Adrenal gland (tissue), 19 donors: ENCODE measurements at regions of chr3 and their contacts with region 1.

Region 1: GRCh38 chr3:51371943-51372557 is 13.0 kb upstream of the MANF start:
- DNase-seq: peak; percentile 57 to 87 (median 76)
- H3K4me3 ChIP-seq: no peak overlapping the region
- H3K27ac ChIP-seq: no peak overlapping the region
- H3K4me1 ChIP-seq: peaks cover 7 to 9% of the 10 kb centered on the region in 2 donors
- H3K27me3 ChIP-seq: no peaks in the 10 kb centered on the region
- CTCF ChIP-seq: peak; percentile 41 to 80 (median 78)
- POLR2A ChIP-seq: no peak

Region 2: GRCh38 chr3:50982540-50983325 is 389.3 kb before region 1 on chr3:
- intact Hi-C with region 1: loop called in 1 of 2 experiments (anchors 5 kb)
- DNase-seq: no peak
- H3K4me3 ChIP-seq: no peak overlapping the region
- H3K27ac ChIP-seq: no peak overlapping the region
- H3K4me1 ChIP-seq: no peaks in the 10 kb centered on the region
- H3K27me3 ChIP-seq: no peaks in the 10 kb centered on the region
- CTCF ChIP-seq: no peak
- POLR2A ChIP-seq: no peak

Region 3: GRCh38 chr3:51024765-51025632 is 347.1 kb before region 1 on chr3:
- intact Hi-C with region 1: no loop called
- DNase-seq: peak in 5 of 7 donors; percentile 7 to 55 (median 27)
- H3K4me3 ChIP-seq: no peak overlapping the region
- H3K27ac ChIP-seq: no peak overlapping the region
- H3K4me1 ChIP-seq: no peaks in the 10 kb centered on the region
- H3K27me3 ChIP-seq: no peaks in the 10 kb centered on the region
- CTCF ChIP-seq: no peak
- POLR2A ChIP-seq: no peak

Region 4: DNA sequence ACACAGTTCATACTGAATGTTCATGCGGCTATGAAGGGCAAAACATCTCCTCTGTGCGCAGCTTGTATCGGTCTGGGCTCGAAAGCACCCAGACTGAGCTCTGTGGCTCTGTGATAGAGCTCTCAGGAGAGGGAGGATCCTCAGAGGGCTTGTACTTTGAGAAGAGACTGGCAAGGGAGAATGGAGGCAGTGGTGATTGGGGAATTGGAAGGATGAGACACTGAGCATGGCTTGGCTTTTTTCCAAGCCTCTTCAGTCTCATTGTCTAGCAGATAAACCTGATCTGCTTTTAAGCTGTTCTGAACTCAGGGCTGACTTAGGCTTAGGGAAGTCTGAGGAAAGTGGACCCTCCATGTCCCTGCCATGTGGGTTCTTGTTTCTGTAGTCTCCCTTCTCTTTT is 209.5 kb after region 1 on chr3:
- intact Hi-C with region 1: no loop called
- DNase-seq: peak in 6 of 7 donors; percentile 20 to 56 (median 30)
- H3K4me3 ChIP-seq: no peak overlapping the region
- H3K27ac ChIP-seq: peak overlapping the region in 1 of 5 donors; percentile 0
- H3K4me1 ChIP-seq: no peaks in the 10 kb centered on the region
- H3K27me3 ChIP-seq: no peaks in the 10 kb centered on the region
- CTCF ChIP-seq: no peak
- POLR2A ChIP-seq: no peak